ENCODE measurements at regions of chr2 and their contacts with region 1.

Region 1: DNA sequence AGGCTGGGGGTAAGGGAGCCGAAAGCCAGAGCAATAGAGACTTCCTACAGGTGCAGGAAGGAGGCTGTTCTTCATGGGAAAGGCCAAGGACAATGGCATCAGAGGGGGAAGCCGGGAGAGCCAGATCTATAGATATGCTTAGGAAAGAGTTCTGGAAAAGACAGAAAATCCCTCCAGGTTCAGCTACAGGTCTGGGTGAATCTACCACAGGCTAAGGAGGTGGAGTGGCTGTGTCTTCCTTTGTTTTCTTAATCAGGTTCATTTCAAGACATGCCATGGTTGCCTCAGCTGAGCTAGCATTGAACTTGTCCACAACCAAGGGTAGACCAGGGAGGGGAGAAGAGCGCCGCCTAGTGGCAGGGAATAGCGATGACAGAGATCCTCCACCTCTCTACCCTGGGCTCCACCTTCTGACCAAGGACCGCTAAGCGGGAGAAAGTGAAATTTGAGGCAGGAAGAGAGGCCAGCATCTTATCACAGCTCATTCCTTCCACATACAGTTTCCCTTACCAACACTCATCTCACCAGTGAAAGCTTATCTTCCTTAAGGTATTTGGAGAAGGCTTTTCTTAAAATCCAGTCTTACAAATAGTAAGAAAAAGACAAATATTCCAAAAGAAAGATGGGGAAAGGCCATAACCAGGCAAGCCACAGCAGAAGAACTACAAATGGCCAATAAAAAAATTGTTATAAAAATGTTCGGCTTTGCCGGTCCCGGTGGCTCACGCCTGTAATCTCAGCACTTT is 74.2 kb downstream of the VIT start:
- DNase-seq: no peak
- H3K4me3 ChIP-seq: no peak overlapping the region
- CTCF ChIP-seq: peak; percentile 76

Region 2: DNA sequence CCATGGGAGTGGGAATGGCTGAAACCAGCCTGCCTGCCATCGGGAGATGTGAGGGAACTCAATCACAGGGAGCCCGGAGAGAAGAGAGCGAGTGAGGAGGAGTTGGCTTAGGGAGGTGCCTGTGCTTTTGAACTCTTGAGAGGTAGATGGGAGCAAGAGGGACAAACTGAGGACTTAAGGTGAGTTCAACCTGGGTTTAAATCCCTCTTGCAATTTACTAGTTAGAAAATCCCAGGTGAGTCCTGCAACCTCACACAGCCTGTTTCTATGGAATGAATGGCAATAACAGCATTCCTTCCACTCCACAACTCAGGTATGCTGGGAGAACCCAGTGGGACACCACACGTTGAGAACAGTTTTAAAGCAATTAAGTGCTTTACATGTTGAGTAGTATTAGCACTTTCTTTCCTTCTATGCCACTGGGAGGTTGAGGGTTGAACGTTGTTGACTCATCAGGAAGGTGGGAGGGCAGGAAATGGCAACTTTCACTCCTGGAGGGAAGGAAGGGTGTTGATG is 17.0 kb before region 1 on chr2:
- CTCF ChIA-PET with region 1: interaction called, 20 read pairs
- POLR2A ChIA-PET with region 1: no interaction called
- DNase-seq: no peak
- H3K4me3 ChIP-seq: no peak overlapping the region
- CTCF ChIP-seq: no peak

Measured in AG04449 (cell line).